Esophagus muscularis mucosa (tissue), 4 donors: ENCODE measurements at regions of chr10 and their contacts with region 1.

Region 1: DNA sequence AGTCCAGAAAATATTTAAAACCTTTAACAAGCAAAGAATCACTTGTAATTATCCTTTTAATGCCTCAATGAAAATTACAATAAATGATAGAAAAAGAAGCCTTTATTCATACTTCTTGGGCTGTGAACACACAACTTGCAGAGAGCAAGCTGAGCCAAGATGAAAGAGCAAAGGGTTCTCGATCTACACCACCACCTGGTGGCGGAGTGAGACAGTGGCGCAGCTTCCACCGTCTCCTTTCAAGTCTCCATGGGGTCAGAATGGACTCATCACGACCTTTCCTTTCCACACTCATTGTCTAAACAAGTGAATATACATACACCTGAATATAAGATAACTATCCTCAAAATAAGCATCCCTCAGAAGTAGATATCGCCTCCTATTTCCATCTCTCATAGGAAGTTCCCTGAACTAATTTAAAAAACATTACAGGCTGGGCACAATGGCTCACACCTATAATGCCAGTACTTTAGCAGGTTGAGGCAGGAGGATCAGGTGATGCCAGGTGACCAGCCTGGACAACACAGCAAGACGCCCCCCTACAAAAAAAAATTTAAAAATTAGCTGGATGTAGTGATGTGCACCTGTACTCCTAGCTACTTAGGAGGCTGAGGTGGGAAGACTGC is 40.7 kb downstream of the ATE1 start:
- DNase-seq: no peak
- H3K4me3 ChIP-seq: no peak overlapping the region
- H3K27ac ChIP-seq: no peak overlapping the region
- H3K4me1 ChIP-seq: peaks cover 0 to 3% (median 0%) of the 10 kb centered on the region in 4 donors
- H3K27me3 ChIP-seq: no peaks in the 10 kb centered on the region
- CTCF ChIP-seq: peak; percentile 77 to 87 (median 85)
- EP300 ChIP-seq: no peak
- POLR2A ChIP-seq: no peak

Region 2: GRCh38 chr10:121734589-121735045 is 152.5 kb before region 1 on chr10:
- intact Hi-C with region 1: loop called (anchors 10 kb)
- DNase-seq: no peak
- H3K4me3 ChIP-seq: no peak overlapping the region
- H3K27ac ChIP-seq: no peak overlapping the region
- H3K4me1 ChIP-seq: peaks cover 0 to 6% (median 4%) of the 10 kb centered on the region in 4 donors
- H3K27me3 ChIP-seq: peaks cover 0 to 4% (median 0%) of the 10 kb centered on the region in 4 donors
- CTCF ChIP-seq: peak; percentile 52 to 80 (median 71)
- EP300 ChIP-seq: no peak
- POLR2A ChIP-seq: no peak